Sciatic nerve (tissue), 2 donors: ENCODE measurements at regions of chr2 and their contacts with region 1.

Region 1: GRCh38 chr2:231900486-231900942 is 25.7 kb downstream of the NPPC start:
- DNase-seq: peak; percentile 82
- ATAC-seq: peak; percentile 39

Region 2: DNA sequence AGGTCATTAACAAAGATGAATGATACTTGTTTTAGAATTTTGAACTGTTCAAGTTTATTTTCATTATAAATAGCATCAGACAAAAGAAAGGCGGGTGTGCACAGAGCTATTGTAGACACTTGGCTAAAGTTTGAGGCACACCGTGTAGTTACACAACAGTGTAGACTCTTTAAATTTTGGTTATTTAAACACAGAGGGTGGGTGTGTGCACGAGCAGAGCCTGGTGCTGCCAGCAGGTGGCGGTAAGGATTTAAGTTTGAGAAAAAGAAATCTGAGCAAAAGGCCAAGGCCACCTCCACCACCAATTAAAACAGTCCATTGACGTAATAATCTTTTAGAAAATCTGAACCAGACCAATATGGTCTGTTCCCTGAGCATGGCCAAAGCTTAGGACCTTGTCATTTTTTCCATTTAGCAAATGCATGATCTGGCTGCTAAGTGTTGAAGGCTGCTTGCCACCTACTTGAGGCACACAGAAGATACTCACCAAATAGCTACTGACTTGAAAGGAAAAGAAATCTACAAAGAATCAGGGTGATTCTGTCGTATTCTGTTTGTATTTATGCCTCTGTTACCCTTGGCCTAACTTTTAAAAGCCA is 99.9 kb before region 1 on chr2:
- intact Hi-C with region 1: no loop called
- DNase-seq: no peak
- ATAC-seq: no peak

Region 3: GRCh38 chr2:231810905-231811304 is 89.6 kb before region 1 on chr2:
- intact Hi-C with region 1: no loop called
- DNase-seq: no peak
- ATAC-seq: no peak

Region 4: GRCh38 chr2:231883468-231883881 is 17.0 kb before region 1 on chr2:
- intact Hi-C with region 1: no loop called
- DNase-seq: no peak
- ATAC-seq: no peak

Region 5: DNA sequence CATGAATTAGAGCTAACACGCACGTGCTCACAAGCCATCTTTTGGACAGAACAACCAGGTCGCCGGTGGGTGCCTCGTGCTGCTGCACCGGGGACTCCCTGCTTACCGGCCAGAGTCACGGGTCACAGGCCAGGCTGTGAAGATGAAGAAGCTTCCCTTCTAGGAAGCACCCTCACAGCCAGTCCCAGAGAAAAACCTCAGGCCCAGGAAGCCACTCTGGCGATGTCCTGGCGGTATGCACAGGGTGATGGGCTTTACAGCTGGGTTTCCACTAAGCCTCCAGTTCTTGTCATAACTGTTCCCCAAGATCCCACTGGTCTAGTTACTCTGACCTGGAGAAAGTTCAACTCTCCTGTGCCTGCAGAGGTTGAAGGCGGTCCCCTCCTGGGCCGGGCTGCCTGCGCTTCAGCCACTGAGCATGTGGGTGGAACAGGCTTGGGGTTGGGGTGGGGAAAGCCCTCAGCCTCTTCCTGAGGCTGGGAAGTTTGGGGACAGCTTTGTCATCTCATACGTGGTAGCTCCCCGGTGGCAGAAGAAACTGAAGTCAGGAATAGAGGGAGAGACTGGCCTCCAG is 45.8 kb after region 1 on chr2:
- intact Hi-C with region 1: no loop called
- DNase-seq: no peak
- ATAC-seq: no peak

Region 6: GRCh38 chr2:232438951-232439757 is 538.6 kb after region 1 on chr2:
- intact Hi-C with region 1: loop called (anchors 5 kb)
- DNase-seq: peak; percentile 53
- ATAC-seq: peak; percentile 63

Region 7: DNA sequence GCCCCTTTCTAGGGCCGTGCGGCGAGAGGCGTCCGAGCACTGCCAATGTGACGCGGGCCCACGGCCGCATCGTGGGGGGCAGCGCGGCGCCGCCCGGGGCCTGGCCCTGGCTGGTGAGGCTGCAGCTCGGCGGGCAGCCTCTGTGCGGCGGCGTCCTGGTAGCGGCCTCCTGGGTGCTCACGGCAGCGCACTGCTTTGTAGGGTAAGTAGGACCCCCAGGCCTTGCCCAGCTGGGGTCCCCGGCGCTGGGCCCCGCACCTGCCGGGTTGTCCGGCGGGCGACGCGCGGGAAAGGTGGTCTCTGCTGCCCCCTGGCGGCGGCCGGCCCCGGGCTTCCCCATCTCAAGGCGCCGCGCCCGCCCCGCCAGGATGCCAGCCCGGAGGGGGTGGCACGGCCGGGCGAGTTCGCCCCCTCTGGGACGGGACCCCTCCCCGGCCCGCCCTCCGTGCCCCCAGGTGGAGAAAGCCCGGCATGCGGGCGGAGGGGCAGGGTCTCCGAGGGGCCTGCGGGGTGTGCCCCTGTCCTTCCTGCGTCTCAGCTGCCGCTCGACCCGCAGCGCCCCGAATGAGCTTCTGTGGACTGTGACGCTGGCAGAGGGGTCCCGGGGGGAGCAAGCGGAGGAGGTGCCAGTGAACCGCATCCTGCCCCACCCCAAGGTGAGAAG is 621.6 kb after region 1 on chr2:
- intact Hi-C with region 1: loop called (anchors 10 kb)
- DNase-seq: peak; percentile 68
- ATAC-seq: no peak